ENCODE measurements at regions of chr6 and their contacts with region 1.

Region 1: GRCh38 chr6:125974214-125974866 is 12.0 kb upstream of the TRMT11 start:
- DNase-seq: no peak
- ATAC-seq: peak; percentile 87
- H3K4me3 Mint-ChIP-seq: no peak overlapping the region
- H3K27ac Mint-ChIP-seq: peak overlapping the region; percentile 55
- H3K4me1 Mint-ChIP-seq: peaks cover 9% of the 10 kb centered on the region
- H3K27me3 Mint-ChIP-seq: no peaks in the 10 kb centered on the region
- CTCF ChIP-seq: peak; percentile 52

Region 2: DNA sequence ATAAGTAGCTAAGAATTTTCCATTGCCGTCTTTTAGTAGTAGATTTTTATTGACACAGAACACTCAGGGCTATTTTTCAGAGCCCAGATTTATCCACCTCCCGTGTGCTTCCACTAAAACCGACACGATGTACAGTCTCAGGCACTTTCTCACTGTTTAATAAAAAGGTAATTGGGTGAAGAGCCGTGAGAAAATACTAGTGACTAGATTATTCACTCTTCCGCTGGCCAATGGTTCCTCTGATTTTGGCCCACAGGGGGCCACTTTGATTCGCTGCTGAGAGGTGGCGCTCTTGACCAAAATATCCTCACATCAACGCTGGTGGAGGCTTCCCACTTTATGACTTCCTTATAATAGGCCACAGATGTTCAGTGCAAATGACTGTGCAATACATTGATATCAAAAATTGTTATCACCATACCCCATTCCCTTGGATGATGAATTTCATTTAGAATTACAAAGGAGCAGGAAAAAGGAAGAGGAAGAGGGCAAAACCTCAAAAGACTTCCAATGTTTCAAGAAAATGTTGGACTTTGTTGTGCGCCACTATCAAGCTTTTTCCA is 660.2 kb before region 1 on chr6:
- CTCF ChIA-PET with region 1: interaction called, 13 read pairs
- POLR2A ChIA-PET with region 1: no interaction called
- intact Hi-C with region 1: loop called (anchors 10 kb)
- DNase-seq: peak; percentile 59
- ATAC-seq: peak; percentile 71
- H3K4me3 Mint-ChIP-seq: no peak overlapping the region
- H3K27ac Mint-ChIP-seq: no peak overlapping the region
- H3K4me1 Mint-ChIP-seq: peaks cover 2% of the 10 kb centered on the region
- H3K27me3 Mint-ChIP-seq: peaks cover 14% of the 10 kb centered on the region
- CTCF ChIP-seq: peak; percentile 66

Region 3: DNA sequence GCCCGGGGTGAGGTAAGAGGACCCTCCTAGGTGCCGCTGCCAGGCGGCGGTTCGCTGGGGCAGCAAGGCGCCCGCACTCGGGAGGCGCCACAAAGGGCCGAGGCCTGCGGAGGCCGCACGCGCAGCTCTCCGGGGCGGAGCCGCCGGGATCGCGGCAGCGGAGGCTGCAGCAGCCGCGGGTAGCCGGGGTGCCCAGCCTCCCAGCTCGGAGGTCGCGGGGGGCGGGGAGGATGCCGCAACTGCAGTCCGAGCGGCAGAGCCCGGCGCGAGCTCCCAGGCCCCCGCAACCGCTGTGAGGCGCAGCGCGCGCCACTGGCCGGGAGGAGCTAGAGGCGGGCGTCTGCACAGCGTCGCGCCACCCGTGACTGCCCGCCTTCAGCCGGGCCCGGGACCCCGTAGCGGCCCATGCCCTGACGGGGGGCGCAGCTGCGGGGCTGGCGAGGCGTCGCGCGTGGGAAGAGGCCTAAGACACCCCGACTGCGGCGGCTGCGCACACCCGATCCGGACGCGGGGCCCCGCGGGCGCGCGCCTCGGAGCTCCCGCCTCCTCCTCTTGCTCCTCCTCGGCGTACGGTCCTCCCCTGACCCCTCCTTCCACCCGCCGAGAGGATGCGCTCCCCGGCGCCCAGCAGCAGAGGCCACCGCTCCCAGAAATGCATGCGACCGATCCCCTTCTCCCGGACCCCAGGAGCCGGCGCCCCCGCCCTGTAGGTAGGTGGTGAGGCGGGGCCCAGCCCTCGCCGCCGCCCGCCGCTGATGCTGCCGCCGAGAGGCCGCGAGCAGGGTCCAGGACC is 183.8 kb before region 1 on chr6 and contains the start of gene NCOA7:
- CTCF ChIA-PET with region 1: interaction called, 36 read pairs
- POLR2A ChIA-PET with region 1: interaction called, 4 read pairs
- intact Hi-C with region 1: no loop called
- DNase-seq: peak; percentile 80
- ATAC-seq: peak; percentile 81
- H3K4me3 Mint-ChIP-seq: peak within 1 kb of the TSS; percentile 94
- H3K27ac Mint-ChIP-seq: peak within 1 kb of the TSS; percentile 98
- H3K4me1 Mint-ChIP-seq: peaks cover 52% of the 10 kb centered on the region
- H3K27me3 Mint-ChIP-seq: no peaks in the 10 kb centered on the region
- CTCF ChIP-seq: no peak
- total RNA-seq, gene NCOA7: 43.4 to 44.9 TPM

Region 4: GRCh38 chr6:125918681-125919566 is 55.4 kb before region 1 on chr6:
- CTCF ChIA-PET with region 1: interaction called, 13 read pairs
- POLR2A ChIA-PET with region 1: no interaction called
- intact Hi-C with region 1: no loop called
- DNase-seq: peak; percentile 67
- ATAC-seq: peak; percentile 97
- H3K4me3 Mint-ChIP-seq: peak overlapping the region; percentile 85
- H3K27ac Mint-ChIP-seq: peak overlapping the region; percentile 97
- H3K4me1 Mint-ChIP-seq: peaks cover 34% of the 10 kb centered on the region
- H3K27me3 Mint-ChIP-seq: no peaks in the 10 kb centered on the region
- CTCF ChIP-seq: no peak

Region 5: DNA sequence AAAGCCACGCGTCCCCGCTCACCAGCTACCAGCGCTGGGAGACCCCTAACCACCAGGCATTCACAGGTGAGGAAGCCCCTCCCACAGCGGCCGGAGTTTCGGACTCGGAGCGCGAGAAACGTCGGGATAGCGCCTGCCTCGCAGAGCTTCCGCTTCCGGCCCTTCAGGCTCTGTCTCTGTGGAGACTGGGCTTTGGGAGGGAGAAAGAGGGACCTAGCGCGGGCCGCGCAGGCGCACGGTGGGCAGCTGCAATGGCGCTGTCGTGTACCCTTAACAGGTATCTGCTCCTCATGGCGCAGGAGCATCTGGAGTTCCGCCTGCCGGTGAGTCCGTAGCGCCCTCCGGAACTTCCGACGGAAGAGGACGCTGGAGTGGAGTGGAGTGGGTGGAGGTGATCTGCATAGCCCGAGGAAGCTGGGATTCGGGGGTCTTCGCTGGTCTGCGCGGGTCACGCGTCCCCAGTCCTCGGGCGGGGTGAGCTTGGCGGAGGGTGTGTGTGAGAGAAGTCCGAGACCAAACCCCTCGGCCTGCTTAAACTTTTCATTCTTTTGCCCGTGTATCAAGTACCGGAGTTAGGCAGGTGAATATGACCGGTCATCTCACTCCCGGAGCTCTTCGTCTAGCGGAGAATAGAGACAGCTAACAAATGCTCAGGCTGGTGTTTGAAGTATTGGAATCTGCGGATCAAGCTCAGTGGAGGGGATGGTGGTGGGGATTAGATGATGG is 12.1 kb after region 1 on chr6 and contains the start of gene TRMT11:
- CTCF ChIA-PET with region 1: interaction called, 48 read pairs
- POLR2A ChIA-PET with region 1: interaction called, 8 read pairs
- intact Hi-C with region 1: no loop called
- DNase-seq: peak; percentile 87
- ATAC-seq: peak; percentile 96
- H3K4me3 Mint-ChIP-seq: no peak within 1 kb of the TSS
- H3K27ac Mint-ChIP-seq: peak within 1 kb of the TSS; percentile 21
- H3K4me1 Mint-ChIP-seq: peaks cover 20% of the 10 kb centered on the region
- H3K27me3 Mint-ChIP-seq: no peaks in the 10 kb centered on the region
- CTCF ChIP-seq: no peak
- total RNA-seq, gene TRMT11: 41.5 to 49.1 TPM

Region 6: GRCh38 chr6:126026001-126026400 is 51.7 kb after region 1 on chr6:
- CTCF ChIA-PET with region 1: no interaction called
- POLR2A ChIA-PET with region 1: no interaction called
- intact Hi-C with region 1: no loop called
- DNase-seq: no peak
- ATAC-seq: no peak
- H3K4me3 Mint-ChIP-seq: no peak overlapping the region
- H3K27ac Mint-ChIP-seq: no peak overlapping the region
- H3K4me1 Mint-ChIP-seq: no peaks in the 10 kb centered on the region
- H3K27me3 Mint-ChIP-seq: no peaks in the 10 kb centered on the region
- CTCF ChIP-seq: no peak

Region 7: DNA sequence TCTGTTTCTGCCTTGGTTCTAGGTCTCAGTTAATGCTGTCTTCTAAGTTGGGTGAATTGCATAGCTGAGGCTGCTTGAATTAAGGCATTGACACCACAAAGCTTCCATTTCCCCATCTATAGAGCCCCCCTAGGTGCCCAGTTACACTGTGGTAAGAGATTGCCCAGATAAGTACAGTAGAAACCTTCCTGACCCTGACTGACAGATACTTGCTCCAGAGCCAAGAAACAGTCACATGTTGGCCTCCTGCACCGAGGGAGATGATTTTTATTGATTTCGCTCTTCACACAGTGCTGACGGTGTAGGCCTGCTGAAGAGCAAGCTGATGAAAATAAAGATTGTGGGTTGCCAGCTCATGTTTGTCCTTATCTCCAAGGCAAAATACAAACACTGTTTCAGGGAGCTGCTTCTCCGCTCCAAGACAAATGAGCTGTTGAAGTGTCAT is 79.9 kb after region 1 on chr6:
- CTCF ChIA-PET with region 1: no interaction called
- POLR2A ChIA-PET with region 1: no interaction called
- intact Hi-C with region 1: no loop called
- DNase-seq: no peak
- ATAC-seq: no peak
- H3K4me3 Mint-ChIP-seq: no peak overlapping the region
- H3K27ac Mint-ChIP-seq: no peak overlapping the region
- H3K4me1 Mint-ChIP-seq: no peaks in the 10 kb centered on the region
- H3K27me3 Mint-ChIP-seq: no peaks in the 10 kb centered on the region
- CTCF ChIP-seq: no peak

Region 8: GRCh38 chr6:126388104-126388598 is 413.8 kb after region 1 on chr6:
- CTCF ChIA-PET with region 1: no interaction called
- POLR2A ChIA-PET with region 1: no interaction called
- intact Hi-C with region 1: no loop called
- DNase-seq: no peak
- ATAC-seq: no peak
- H3K4me3 Mint-ChIP-seq: no peak overlapping the region
- H3K27ac Mint-ChIP-seq: no peak overlapping the region
- H3K4me1 Mint-ChIP-seq: no peaks in the 10 kb centered on the region
- H3K27me3 Mint-ChIP-seq: no peaks in the 10 kb centered on the region
- CTCF ChIP-seq: no peak

Measured in activated CD8-positive, alpha-beta T cell treated with anti-CD3 and anti-CD28 coated beads for 36 hours (primary cell).